CD4-positive, alpha-beta T cell (primary cell): ENCODE measurements at regions of chr3 and their contacts with region 1.

Region 1: DNA sequence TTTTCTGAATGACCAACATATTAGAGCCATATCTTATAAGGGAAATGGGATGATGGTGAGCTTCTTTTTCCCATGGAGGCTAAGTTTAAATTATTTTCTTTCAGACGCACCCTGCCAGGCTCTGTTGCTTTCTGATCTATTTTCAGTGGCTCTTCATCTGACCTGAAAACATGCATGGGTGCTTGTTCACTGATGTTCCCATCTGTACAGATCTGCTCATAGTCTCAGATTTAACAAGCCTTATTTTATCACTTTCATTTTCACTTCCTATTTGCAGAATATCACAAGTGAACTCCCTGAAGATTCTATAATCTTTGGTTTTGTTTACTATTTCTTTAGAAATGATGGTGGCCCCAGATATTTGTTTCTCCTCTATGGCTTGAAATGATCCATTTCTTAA is 31.1 kb upstream of the SUCLG2 start:
- DNase-seq: peak in 3 of 14 experiments; percentile 14 to 45 (median 29)
- ATAC-seq: no peak
- H3K4me3 ChIP-seq: peak overlapping the region; percentile 19
- H3K4me3 Mint-ChIP-seq: peak overlapping the region; percentile 65
- H3K27ac ChIP-seq: peak overlapping the region in 1 of 2 donors; percentile 16
- H3K27ac Mint-ChIP-seq: peak overlapping the region; percentile 70
- H3K4me1 ChIP-seq: peaks cover 6% of the 10 kb centered on the region
- H3K4me1 Mint-ChIP-seq: peaks cover 39% of the 10 kb centered on the region
- H3K27me3 ChIP-seq: no peaks in the 10 kb centered on the region
- H3K27me3 Mint-ChIP-seq: no peaks in the 10 kb centered on the region
- CTCF ChIP-seq: no peak

Region 2: GRCh38 chr3:67647390-67647878 is 38.1 kb before region 1 on chr3:
- CTCF ChIA-PET with region 1: no interaction called
- POLR2A ChIA-PET with region 1: no interaction called
- intact Hi-C with region 1: loop called in 1 of 2 experiments (anchors 5 kb)
- DNase-seq: no peak
- ATAC-seq: no peak
- H3K4me3 ChIP-seq: no peak overlapping the region
- H3K4me3 Mint-ChIP-seq: no peak overlapping the region
- H3K27ac ChIP-seq: no peak overlapping the region
- H3K27ac Mint-ChIP-seq: no peak overlapping the region
- H3K4me1 ChIP-seq: peaks cover 20% of the 10 kb centered on the region
- H3K4me1 Mint-ChIP-seq: peaks cover 89% of the 10 kb centered on the region
- H3K27me3 ChIP-seq: no peaks in the 10 kb centered on the region
- H3K27me3 Mint-ChIP-seq: no peaks in the 10 kb centered on the region
- CTCF ChIP-seq: no peak